Gastrocnemius medialis (tissue), 4 donors: ENCODE measurements at regions of chr6 and their contacts with region 1.

Region 1: GRCh38 chr6:37691904-37692806 is 5.5 kb downstream of the MDGA1 start:
- DNase-seq: peak; percentile 40 to 56
- ATAC-seq: peak; percentile 77 to 84
- H3K4me3 ChIP-seq: no peak overlapping the region
- H3K27ac ChIP-seq: no peak overlapping the region
- H3K4me1 ChIP-seq: peaks cover 12 to 16% of the 10 kb centered on the region in 2 donors
- H3K27me3 ChIP-seq: peaks cover 39 to 43% (median 42%) of the 10 kb centered on the region in 3 donors
- CTCF ChIP-seq: peak; percentile 91 to 97 (median 95)
- POLR2A ChIP-seq: no peak

Region 2: DNA sequence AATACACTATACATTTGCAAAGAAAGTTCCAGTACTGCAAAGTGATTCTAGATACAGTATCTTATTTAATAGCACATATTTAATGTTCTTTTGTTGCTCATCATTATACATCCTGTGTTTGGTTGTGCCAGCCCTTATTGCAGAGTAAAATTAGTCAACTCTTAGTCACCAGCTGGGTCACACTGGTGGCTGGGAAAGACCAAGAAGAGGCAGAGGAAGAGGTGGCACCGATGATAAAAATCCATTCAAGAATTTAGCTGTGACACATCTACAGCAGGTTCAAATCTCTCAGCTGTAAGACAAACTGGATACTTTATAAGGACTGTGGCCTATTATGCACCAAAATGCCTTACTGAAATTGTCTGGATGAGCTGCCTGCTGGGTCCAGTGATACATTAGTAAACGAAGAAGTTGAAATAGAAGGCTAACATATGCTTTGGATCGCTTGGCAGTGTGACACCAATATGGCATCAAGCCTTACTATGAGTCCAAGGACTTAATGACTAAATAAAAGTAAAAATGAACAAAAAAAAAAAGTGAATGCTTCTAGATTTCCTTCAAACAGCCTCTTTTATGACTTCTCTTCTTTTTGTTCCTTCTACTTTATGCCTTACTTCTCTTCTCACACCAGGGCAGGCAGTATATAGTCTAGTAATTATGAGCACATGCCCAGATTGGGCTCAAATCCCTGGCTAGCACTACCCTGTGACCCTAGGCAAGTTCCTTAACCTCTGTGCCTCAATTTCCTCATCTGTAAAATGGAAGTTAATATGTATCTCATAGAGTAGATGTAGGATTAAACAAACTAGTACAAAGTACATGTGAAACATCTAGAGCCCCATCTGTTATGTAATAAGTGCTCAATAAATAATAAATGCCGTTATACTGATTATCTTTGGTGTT is 367.8 kb before region 1 on chr6:
- in situ Hi-C with region 1: loop called in 2 of 4 experiments (anchors 5 to 10 kb)
- intact Hi-C with region 1: loop called (anchors 2 kb)
- DNase-seq: no peak
- ATAC-seq: no peak
- H3K4me3 ChIP-seq: no peak overlapping the region
- H3K27ac ChIP-seq: no peak overlapping the region
- H3K4me1 ChIP-seq: no peaks in the 10 kb centered on the region
- H3K27me3 ChIP-seq: no peaks in the 10 kb centered on the region
- CTCF ChIP-seq: no peak
- POLR2A ChIP-seq: no peak

Region 3: GRCh38 chr6:37353761-37354525 is 338.2 kb before region 1 on chr6 and contains the start of gene RNF8:
- in situ Hi-C with region 1: loop called in 1 of 4 experiments (anchors 25 kb)
- intact Hi-C with region 1: loop called (anchors 10 kb)
- DNase-seq: peak; percentile 73 to 83
- ATAC-seq: peak; percentile 89 to 91
- H3K4me3 ChIP-seq: peak within 1 kb of the TSS; percentile 92 to 99 (median 93)
- H3K27ac ChIP-seq: peak within 1 kb of the TSS; percentile 8 to 64 (median 48)
- H3K4me1 ChIP-seq: peaks cover 19 to 22% of the 10 kb centered on the region in 2 donors
- H3K27me3 ChIP-seq: no peaks in the 10 kb centered on the region
- CTCF ChIP-seq: no peak
- POLR2A ChIP-seq: no peak
- total RNA-seq, gene RNF8: 6.9 to 17.8 (median 11.9) TPM

Region 4: GRCh38 chr6:37381579-37381978 is 310.6 kb before region 1 on chr6:
- in situ Hi-C with region 1: no loop called
- intact Hi-C with region 1: loop called (anchors 2 kb)
- DNase-seq: peak; percentile 3 to 43
- ATAC-seq: peak; percentile 82 to 97
- H3K4me3 ChIP-seq: no peak overlapping the region
- H3K27ac ChIP-seq: no peak overlapping the region
- H3K4me1 ChIP-seq: no peaks in the 10 kb centered on the region
- H3K27me3 ChIP-seq: no peaks in the 10 kb centered on the region
- CTCF ChIP-seq: peak; percentile 34 to 59 (median 53)
- POLR2A ChIP-seq: no peak

Region 5: GRCh38 chr6:37499433-37500293 is 192.5 kb before region 1 on chr6 and contains the start of gene CCDC167:
- in situ Hi-C with region 1: loop called in 3 of 4 experiments (anchors 25 kb)
- intact Hi-C with region 1: no loop called
- DNase-seq: peak; percentile 85 to 88
- ATAC-seq: peak; percentile 96
- H3K4me3 ChIP-seq: peak within 1 kb of the TSS; percentile 68 to 85 (median 82)
- H3K27ac ChIP-seq: peak within 1 kb of the TSS; percentile 12 to 67 (median 43)
- H3K4me1 ChIP-seq: peaks cover 8% of the 10 kb centered on the region in 2 donors
- H3K27me3 ChIP-seq: no peaks in the 10 kb centered on the region
- CTCF ChIP-seq: no peak
- POLR2A ChIP-seq: no peak
- total RNA-seq, gene CCDC167: 23.4 to 35.0 (median 30.8) TPM

Region 6: DNA sequence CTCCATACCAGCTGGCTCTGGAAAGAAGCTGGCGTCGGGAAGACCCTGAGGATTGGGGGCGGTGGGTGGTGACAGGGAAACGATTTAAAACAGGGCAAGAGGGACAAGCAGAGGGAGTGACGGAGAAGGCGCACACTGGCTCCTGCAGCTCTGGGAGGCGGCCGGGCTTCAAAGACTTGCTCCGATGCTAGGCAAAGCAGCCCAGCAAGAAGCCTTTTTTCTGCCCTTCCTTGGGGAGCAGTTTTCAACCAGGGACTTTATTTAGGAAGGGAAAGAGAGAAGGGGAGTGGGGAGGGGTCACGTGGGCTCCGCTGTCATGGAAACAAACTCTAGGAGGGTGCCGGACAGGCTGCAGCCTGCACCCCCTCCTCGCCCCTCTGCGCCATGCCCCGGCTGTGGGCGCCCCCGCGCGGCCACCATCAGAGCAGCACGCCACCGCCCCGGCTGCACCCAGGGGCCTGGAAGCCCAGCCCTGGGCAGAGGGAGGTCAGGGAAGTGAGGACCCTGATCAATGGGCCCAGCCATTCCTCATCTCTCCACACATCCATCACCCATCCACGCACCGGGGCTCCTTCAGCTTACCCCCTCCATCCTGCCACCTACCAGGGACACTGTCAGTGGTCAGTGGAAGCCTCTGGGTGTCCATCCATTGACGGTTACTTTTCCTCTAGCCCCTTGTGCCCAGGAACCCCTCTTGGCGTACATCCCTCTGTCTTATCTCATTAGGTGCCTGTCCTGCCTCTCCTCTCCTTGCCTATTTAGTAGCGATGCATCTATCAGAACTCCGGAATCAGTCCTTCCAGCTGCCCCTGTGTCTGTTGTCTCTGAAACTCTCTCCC is 125.8 kb before region 1 on chr6:
- in situ Hi-C with region 1: no loop called
- intact Hi-C with region 1: loop called (anchors 5 kb)
- DNase-seq: no peak
- ATAC-seq: peak in 1 of 2 donors; percentile 33
- H3K4me3 ChIP-seq: peak overlapping the region; percentile 18 to 54 (median 33)
- H3K27ac ChIP-seq: no peak overlapping the region
- H3K4me1 ChIP-seq: peaks cover 3 to 6% of the 10 kb centered on the region in 2 donors
- H3K27me3 ChIP-seq: peaks cover 8 to 18% (median 13%) of the 10 kb centered on the region in 3 donors
- CTCF ChIP-seq: peak; percentile 27 to 79 (median 69)
- POLR2A ChIP-seq: no peak

Region 7: GRCh38 chr6:38143191-38144150 is 451.3 kb after region 1 on chr6:
- in situ Hi-C with region 1: no loop called
- intact Hi-C with region 1: no loop called
- DNase-seq: no peak
- ATAC-seq: no peak
- H3K4me3 ChIP-seq: no peak overlapping the region
- H3K27ac ChIP-seq: no peak overlapping the region
- H3K4me1 ChIP-seq: peaks cover 0 to 11% of the 10 kb centered on the region in 2 donors
- H3K27me3 ChIP-seq: no peaks in the 10 kb centered on the region
- CTCF ChIP-seq: no peak
- POLR2A ChIP-seq: no peak